Left cardiac atrium (tissue), 4 donors: ENCODE measurements at regions of chr1 and their contacts with region 1.

Region 1: GRCh38 chr1:179809506-179810366 is 66.6 kb downstream of the FAM163A start:
- DNase-seq: peak; percentile 61
- ATAC-seq: peak; percentile 35 to 53

Region 2: GRCh38 chr1:179080866-179081686 is 728.7 kb before region 1 on chr1:
- intact Hi-C with region 1: no loop called
- DNase-seq: peak; percentile 36
- ATAC-seq: no peak

Region 3: DNA sequence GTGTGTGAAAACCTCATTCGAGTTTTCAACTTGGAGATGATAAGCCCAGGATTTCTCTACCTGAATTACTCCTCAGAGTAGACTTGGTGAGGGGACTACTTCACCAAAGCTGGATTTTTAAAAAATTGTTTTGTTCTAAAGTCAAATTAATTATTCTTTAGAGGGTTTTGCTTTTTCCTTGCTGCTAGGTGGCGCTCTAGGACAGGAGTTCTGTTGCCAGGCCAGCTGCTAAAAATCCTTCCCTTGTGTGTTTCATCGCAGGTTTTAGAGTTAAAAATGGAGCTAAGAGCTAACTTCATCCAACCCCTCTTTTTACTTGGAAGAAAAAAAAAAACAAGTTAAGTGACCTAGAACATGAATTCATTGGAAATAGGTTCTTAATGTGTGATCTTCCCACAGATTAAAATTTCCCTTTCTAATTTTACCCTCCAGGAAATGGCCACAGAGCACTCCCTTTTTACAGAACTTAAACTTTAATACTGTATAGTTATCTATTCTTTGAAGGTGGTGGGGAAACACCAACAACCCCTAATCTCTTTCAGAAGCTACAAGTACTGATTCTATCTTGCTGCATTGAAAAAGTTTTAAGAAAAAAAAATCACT is 103.3 kb before region 1 on chr1:
- intact Hi-C with region 1: loop called (anchors 1 to 5 kb)
- DNase-seq: peak; percentile 58
- ATAC-seq: no peak

Region 4: GRCh38 chr1:180033390-180033789 is 223.7 kb after region 1 on chr1:
- intact Hi-C with region 1: no loop called
- DNase-seq: no peak
- ATAC-seq: no peak